ENCODE measurements at regions of chr10 and their contacts with region 1.

Region 1: DNA sequence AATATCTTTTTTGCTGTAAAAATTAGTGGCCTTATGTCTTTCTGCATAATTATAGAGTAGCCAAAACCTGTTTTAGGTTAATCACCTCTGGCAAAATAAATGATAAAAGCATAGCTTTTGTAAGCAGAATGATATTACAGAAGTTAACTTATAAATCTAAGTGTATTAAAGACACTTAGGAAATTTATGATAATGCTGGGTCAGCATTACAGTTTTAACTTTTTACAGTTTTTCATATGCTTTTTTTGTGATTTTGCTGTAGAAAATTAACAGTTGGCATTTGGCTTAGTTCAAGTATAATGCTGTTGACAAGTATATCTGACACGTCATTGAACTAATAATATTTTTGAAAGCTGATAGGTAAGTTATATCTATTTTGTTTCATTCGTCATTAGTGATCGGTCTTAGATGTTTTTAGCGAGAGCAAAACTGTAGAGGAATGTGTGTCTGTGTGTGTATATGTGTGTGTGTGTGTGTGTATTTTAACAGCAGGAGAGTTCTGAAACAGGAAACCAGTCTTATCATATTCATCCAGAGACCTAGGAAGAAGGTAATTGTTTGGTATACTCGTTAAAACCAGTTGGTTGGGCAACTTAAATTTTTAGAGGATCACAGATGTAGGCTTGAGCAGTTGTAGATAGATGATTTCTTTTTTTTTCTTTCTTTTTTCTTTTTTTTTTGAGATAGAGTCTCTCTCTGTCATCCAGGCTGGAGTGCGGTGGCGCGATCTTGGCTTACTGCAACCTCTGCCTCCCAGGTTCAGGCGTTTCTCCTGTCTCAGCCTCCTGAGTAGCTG is 15.4 kb downstream of the PTEN start:
- DNase-seq: no peak
- H3K4me3 ChIP-seq: no peak overlapping the region
- H3K4me3 Mint-ChIP-seq: peak overlapping the region in 3 of 8 donors; percentile 4 to 36 (median 5)
- H3K27ac ChIP-seq: no peak overlapping the region
- H3K27ac Mint-ChIP-seq: peak overlapping the region in 1 of 7 donors; percentile 19
- H3K4me1 ChIP-seq: peaks cover 52% of the 10 kb centered on the region
- H3K4me1 Mint-ChIP-seq: peaks cover 30 to 56% (median 39%) of the 10 kb centered on the region in 4 donors
- H3K27me3 ChIP-seq: no peaks in the 10 kb centered on the region
- H3K27me3 Mint-ChIP-seq: no peaks in the 10 kb centered on the region

Region 2: GRCh38 chr10:87868277-87868676 is 10.6 kb before region 1 on chr10:
- CTCF ChIA-PET with region 1: interaction called, 3 read pairs
- POLR2A ChIA-PET with region 1: interaction called, 42 read pairs
- intact Hi-C with region 1: loop called (anchors 1 kb)
- DNase-seq: no peak
- H3K4me3 ChIP-seq: no peak overlapping the region
- H3K4me3 Mint-ChIP-seq: peak overlapping the region; percentile 13 to 78 (median 67)
- H3K27ac ChIP-seq: no peak overlapping the region
- H3K27ac Mint-ChIP-seq: peak overlapping the region in 2 of 7 donors; percentile 17 to 46
- H3K4me1 ChIP-seq: peaks cover 70% of the 10 kb centered on the region
- H3K4me1 Mint-ChIP-seq: peaks cover 43 to 80% (median 57%) of the 10 kb centered on the region in 4 donors
- H3K27me3 ChIP-seq: no peaks in the 10 kb centered on the region
- H3K27me3 Mint-ChIP-seq: no peaks in the 10 kb centered on the region